SK-N-SH (cell line): ENCODE measurements at regions of chr14 and their contacts with region 1.

Region 1: DNA sequence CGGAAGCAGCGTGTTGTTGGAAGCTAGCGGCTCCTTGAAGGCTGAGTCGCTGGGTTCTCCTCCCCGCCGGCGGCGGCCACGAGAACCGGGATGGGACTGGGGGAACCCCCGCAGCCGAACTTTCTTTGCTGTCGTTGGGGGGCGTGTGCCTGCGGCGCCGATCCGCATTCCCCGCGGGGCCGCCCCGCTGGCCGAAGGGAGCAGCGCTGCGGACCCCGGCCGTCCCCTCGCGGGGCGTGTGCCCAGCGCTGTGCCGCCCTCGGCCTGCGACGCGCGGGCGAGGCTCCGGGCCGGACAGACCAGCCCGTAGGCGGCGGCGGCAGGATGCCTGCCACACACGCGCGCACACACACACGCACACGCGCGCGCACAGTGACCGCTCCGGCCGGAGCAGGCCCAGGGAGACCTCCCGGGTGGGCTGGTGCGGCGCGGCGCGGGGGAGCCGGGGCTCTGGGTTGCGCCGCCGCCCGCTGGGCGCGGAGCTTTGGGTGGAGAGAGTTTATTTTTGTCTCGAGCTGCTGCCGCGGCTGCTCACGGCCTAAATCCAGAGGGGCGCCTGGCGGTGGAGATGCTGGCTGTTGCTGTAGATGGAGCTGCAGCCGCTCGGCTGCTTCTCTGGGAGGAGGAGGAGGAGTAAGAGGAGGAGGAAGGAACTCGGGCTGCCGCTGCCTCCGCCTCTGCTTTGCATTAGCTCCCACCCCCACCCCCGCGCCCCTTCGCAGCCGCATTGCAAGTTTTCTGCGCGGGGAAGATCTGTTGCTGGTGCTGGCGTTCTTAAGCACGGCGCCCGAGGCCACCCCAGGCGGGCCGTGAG is at the start of gene SAMD4A:
- DNase-seq: peak; percentile 77
- H3K4me3 ChIP-seq: peak within 1 kb of the TSS; percentile 70 to 73
- H3K27ac ChIP-seq: peak within 1 kb of the TSS; percentile 82 to 93
- H3K4me1 ChIP-seq: peaks cover 22 to 28% of the 10 kb centered on the region in 2 experiments
- H3K27me3 ChIP-seq: no peaks in the 10 kb centered on the region
- CTCF ChIP-seq: peak; percentile 42
- EP300 ChIP-seq: no peak
- RAD21 ChIP-seq: peak; percentile 24; the same call in 1 of the 2 replicates
- polyA plus RNA-seq, gene SAMD4A: 5.0 and 5.9 TPM in 2 replicates

Region 2: GRCh38 chr14:54299410-54300363 is 266.9 kb before region 1 on chr14:
- CTCF ChIA-PET with region 1: no interaction called
- POLR2A ChIA-PET with region 1: no interaction called
- DNase-seq: peak; percentile 41
- H3K4me3 ChIP-seq: no peak overlapping the region
- H3K27ac ChIP-seq: peak overlapping the region in 1 of 2 experiments; percentile 62; a peak in 2 of 4 replicates
- H3K4me1 ChIP-seq: no peaks in the 10 kb centered on the region; a peak in 1 of 4 replicates
- H3K27me3 ChIP-seq: no peaks in the 10 kb centered on the region; the same call in 1 of the 2 replicates
- CTCF ChIP-seq: no peak
- EP300 ChIP-seq: no peak
- RAD21 ChIP-seq: no peak

Region 3: DNA sequence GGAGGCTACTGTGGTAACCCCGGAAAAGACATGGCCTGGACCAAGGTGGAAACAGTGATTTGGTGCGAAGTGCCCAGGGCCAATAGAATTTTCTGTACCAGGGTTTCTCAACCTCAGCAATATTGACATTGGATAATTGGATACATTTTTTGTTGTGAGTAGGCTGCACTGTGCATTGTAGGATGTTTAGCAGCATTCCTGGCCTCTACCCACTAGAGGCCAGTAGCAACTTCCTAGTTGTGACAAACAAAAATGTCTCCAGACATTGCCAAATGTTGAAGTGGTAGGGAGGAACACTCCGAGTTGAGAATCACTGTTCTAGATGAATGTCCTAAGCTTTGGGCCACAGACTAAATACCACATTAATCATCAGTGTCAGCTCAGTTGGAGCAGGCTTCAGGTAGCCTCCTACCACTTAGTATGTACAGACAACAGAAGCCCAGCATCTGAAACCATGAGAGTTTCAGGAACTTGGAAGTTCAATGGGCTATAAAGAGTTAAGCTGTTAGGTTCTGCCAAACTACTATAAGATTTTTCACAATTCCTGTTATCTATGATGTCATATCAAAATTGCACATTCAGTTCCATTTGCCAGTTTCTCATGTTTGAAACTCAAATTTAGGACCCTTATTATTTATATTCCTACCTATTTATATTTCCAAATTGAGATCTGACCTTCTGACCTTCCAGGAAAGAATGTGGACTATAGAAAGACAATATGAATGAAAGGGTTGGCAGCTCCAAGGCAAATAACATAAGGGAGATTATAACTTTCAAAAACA is 63.0 kb before region 1 on chr14:
- CTCF ChIA-PET with region 1: no interaction called
- POLR2A ChIA-PET with region 1: no interaction called
- DNase-seq: no peak
- H3K4me3 ChIP-seq: no peak overlapping the region
- H3K27ac ChIP-seq: no peak overlapping the region
- H3K4me1 ChIP-seq: no peaks in the 10 kb centered on the region; a peak in 1 of 4 replicates
- H3K27me3 ChIP-seq: no peaks in the 10 kb centered on the region
- CTCF ChIP-seq: peak; percentile 55
- EP300 ChIP-seq: no peak
- RAD21 ChIP-seq: peak; percentile 50

Region 4: GRCh38 chr14:54683882-54684794 is 117.5 kb after region 1 on chr14:
- CTCF ChIA-PET with region 1: interaction called, 51 read pairs
- POLR2A ChIA-PET with region 1: interaction called, 5 read pairs
- DNase-seq: peak; percentile 66
- H3K4me3 ChIP-seq: peak overlapping the region; percentile 1 to 14; a peak in 3 of 4 replicates
- H3K27ac ChIP-seq: peak overlapping the region; percentile 72 to 81
- H3K4me1 ChIP-seq: peaks cover 38 to 50% of the 10 kb centered on the region in 2 experiments
- H3K27me3 ChIP-seq: no peaks in the 10 kb centered on the region
- CTCF ChIP-seq: no peak
- EP300 ChIP-seq: peak in 1 of 2 experiments; percentile 69; a peak in 2 of 4 replicates
- RAD21 ChIP-seq: no peak

Region 5: GRCh38 chr14:54700717-54701290 is 134.2 kb after region 1 on chr14:
- CTCF ChIA-PET with region 1: interaction called, 16 read pairs
- POLR2A ChIA-PET with region 1: interaction called, 3 read pairs
- DNase-seq: no peak
- H3K4me3 ChIP-seq: no peak overlapping the region
- H3K27ac ChIP-seq: no peak overlapping the region
- H3K4me1 ChIP-seq: peaks cover 10 to 11% of the 10 kb centered on the region in 2 experiments; a peak in 2 of 4 replicates
- H3K27me3 ChIP-seq: no peaks in the 10 kb centered on the region
- CTCF ChIP-seq: no peak
- EP300 ChIP-seq: no peak
- RAD21 ChIP-seq: no peak

Region 6: DNA sequence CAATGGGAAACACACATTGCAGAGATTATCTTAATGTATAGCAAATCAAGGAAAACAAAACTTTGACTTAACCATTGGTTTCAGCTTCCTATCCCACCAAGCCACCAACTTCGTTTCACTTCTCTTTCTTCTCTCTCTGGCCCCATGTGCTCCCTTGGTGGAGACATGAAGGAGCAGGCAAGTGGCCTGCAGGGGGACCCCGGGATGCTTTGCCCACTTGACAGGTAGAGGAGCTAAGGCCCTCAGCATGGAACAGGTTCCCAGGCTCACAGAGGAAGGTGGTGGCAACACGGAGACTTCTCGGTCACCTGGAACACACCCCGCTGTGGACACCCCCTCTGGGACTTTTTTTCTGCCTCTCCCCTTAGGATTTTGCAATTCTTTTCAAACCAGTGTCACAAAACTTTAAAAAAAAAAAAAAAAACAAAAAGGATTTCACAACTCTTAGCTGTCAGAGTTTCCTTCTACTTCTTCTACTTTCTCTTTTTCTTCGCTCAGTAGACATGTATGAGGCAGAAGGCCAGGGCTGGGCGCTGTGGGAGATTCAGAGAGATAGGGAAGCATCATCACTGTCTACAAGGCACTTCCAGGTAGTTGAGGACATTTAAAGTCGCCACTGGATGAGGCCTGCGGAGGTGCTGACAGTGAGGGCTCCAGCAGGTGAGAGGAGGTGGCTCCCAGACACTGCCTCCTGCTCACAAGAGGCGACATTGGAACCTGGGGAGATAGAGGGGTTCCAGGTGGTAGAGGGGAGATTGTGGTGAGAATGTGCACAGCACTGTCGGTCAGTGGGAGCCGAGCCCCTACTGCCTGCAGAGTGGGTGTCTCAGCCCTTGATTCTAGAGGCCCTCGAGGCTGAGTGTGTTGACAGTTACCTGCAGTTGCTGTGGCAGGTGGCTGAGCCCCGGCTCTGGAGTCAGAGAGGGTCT is 216.4 kb after region 1 on chr14:
- CTCF ChIA-PET with region 1: interaction called, 171 read pairs
- POLR2A ChIA-PET with region 1: interaction called, 4 read pairs
- DNase-seq: no peak
- H3K4me3 ChIP-seq: no peak overlapping the region
- H3K27ac ChIP-seq: no peak overlapping the region; a peak in 1 of 4 replicates
- H3K4me1 ChIP-seq: peaks cover 26 to 42% of the 10 kb centered on the region in 2 experiments; a peak in 2 of 4 replicates
- H3K27me3 ChIP-seq: no peaks in the 10 kb centered on the region
- CTCF ChIP-seq: peak; percentile 21; the same call in 1 of the 2 replicates
- EP300 ChIP-seq: no peak
- RAD21 ChIP-seq: peak; percentile 25; the same call in 1 of the 2 replicates